Right cardiac atrium (tissue), 5 donors: ENCODE measurements at regions of chr12 and their contacts with region 1.

Region 1: GRCh38 chr12:52023182-52023975 is 16.6 kb downstream of the TAMALIN start:
- DNase-seq: peak; percentile 91 to 96 (median 96)
- ATAC-seq: peak; percentile 74 to 78
- H3K4me3 ChIP-seq: peak overlapping the region; percentile 25
- H3K27ac ChIP-seq: peak overlapping the region; percentile 76
- H3K4me1 ChIP-seq: peaks cover 3% of the 10 kb centered on the region
- H3K27me3 ChIP-seq: no peaks in the 10 kb centered on the region

Region 2: DNA sequence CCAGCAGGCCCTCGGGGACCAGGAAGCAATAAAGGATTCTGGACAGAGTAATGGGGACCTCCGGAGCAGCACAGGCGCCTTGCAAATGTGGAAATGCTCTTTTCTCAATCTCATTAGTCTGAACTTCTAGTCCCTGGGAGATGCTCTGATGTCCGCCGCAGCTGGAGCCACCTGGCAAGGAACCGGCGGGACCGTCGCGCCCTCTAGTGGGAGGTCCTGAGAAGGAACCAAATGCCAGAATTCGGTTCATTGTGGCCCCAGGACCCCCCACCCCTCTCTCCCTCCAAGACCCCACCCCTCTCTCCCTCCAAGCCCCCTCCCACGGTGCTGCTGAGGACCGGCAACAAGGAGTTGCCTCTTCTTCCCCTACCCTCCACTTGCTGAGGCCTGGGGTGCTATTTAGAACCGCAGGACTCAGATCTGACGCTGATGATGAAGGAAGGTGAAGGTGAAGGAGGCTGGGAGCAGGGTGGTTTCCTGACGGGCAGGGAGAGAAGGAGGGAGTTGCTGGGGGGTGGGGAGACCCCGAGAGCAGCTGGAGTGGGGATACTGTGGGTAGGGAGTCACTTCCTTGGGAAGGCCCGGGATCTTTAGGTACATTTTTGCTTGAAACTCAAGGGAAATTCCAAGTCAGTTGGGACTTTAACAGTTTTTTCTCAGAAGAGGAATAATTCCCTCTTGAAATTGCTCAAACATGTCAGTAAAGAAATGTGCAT is 98.6 kb after region 1 on chr12:
- intact Hi-C with region 1: loop called in 1 of 4 experiments (anchors 10 kb)
- DNase-seq: peak; percentile 67 to 86 (median 86)
- ATAC-seq: peak in 1 of 2 donors; percentile 7
- H3K4me3 ChIP-seq: no peak overlapping the region
- H3K27ac ChIP-seq: no peak overlapping the region
- H3K4me1 ChIP-seq: peaks cover 8% of the 10 kb centered on the region
- H3K27me3 ChIP-seq: no peaks in the 10 kb centered on the region